IMR-90 (cell line): ENCODE measurements at regions of chr2 and their contacts with region 1.

Region 1: DNA sequence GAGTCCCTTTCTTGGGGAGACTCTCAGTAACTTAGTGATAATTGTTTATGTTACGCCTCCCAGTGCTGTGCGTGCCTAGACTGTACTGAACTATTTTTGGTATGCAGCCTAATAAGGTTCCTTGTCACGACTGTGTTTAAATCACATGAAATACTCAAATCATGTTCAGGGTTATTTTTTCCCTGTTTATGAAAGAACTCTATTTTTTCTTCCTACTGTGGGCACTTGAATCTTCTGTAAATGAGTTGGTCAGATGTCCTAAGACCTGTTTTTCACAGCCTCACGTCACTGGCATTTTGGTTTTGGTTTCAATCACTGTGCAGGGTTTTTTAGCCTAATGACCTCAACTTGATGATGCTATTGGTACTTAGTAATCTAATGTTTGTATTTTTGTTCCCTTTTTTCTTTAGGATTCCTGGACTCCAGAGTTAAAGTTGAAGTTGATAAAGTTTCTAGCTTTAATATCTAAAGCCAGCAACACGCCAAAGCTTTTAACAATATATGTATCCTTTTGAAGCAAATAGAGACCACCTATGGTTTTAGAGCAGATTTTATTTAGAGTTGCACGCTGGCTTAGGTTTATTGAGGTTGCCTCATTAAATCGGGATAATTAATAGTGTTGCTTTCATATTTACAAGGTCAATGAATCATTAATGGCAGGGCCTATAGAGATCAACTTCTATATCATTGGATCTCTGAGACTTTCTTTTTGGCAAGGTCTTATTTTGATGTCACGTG is 24.1 kb downstream of the ARMC9 start:
- DNase-seq: peak; percentile 88
- ATAC-seq: peak; percentile 76
- H3K4me3 ChIP-seq: no peak overlapping the region
- H3K27ac ChIP-seq: peak overlapping the region; percentile 89; the same call in 1 of the 2 replicates
- H3K4me1 ChIP-seq: peaks cover 16% of the 10 kb centered on the region
- H3K27me3 ChIP-seq: no peaks in the 10 kb centered on the region
- CTCF ChIP-seq: no peak
- POLR2A ChIP-seq: no peak
- RAD21 ChIP-seq: no peak

Region 2: GRCh38 chr2:230614913-230615332 is 607.6 kb before region 1 on chr2:
- CTCF ChIA-PET with region 1: no interaction called
- POLR2A ChIA-PET with region 1: no interaction called
- dilution Hi-C with region 1: no loop called
- in situ Hi-C with region 1: no loop called
- intact Hi-C with region 1: no loop called
- DNase-seq: no peak
- ATAC-seq: no peak
- H3K4me3 ChIP-seq: no peak overlapping the region
- H3K27ac ChIP-seq: no peak overlapping the region
- H3K4me1 ChIP-seq: peaks cover 10% of the 10 kb centered on the region
- H3K27me3 ChIP-seq: no peaks in the 10 kb centered on the region
- CTCF ChIP-seq: no peak
- POLR2A ChIP-seq: no peak
- RAD21 ChIP-seq: no peak

Region 3: DNA sequence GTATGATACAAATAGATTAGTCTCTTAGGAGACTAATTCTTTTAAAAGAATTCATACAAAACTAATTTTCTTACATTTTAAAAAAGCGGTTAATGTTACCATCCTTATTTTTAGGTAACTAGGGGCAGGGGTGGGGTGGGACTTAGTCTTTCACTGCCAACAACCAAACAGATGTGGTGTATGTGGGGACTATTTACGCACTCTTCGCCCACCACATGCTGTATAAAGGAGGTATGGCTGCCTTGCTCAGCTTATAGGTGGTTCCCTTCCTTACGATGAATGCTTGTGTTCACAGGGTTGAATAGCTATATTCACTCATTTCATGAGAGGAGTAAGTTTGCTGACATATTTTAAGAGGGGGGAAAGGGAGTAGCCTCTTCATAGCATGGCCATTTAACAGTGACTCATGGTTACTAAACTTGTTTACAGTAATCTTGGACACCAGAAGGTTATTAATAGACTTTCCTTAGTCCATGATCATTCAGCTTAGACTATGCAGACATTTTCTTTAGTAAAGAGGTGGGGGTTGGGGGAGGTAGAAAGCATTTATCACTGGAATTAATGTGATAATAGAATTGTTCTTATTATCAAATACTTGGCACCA is 448.0 kb before region 1 on chr2:
- CTCF ChIA-PET with region 1: no interaction called
- POLR2A ChIA-PET with region 1: no interaction called
- dilution Hi-C with region 1: no loop called
- in situ Hi-C with region 1: no loop called
- intact Hi-C with region 1: no loop called
- DNase-seq: peak; percentile 92
- ATAC-seq: peak; percentile 89
- H3K4me3 ChIP-seq: no peak overlapping the region
- H3K27ac ChIP-seq: peak overlapping the region; percentile 67; the same call in 1 of the 2 replicates
- H3K4me1 ChIP-seq: peaks cover 12% of the 10 kb centered on the region
- H3K27me3 ChIP-seq: no peaks in the 10 kb centered on the region
- CTCF ChIP-seq: no peak
- POLR2A ChIP-seq: no peak
- RAD21 ChIP-seq: no peak

Region 4: DNA sequence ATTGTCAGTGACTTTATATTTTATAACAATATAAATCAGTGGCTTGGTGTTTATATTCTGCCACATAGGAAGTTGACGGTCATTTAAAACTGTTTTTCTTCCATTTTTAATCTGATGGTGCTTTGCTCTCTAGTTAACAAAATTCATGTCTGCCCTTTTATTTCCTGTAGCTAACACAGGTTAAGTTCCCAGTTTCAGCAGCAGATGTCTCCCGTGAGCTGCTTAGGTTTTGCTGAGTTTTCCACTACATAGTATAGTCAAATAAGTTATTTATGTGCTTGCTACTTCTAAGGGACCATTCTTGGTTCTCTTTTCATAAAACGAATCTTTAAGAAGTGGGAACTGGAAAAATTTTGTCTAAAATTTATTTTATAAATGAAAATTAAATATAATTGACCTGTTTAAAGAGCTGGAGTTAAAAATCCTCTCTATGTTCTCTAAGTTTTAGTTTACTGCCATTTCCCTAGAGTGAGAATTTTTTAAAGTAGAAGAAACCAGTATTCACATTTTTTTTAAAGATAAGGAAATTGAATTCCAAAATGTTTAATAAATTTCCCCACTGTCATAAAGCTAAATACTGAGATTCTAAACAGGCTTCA is 118.3 kb before region 1 on chr2:
- CTCF ChIA-PET with region 1: no interaction called
- POLR2A ChIA-PET with region 1: no interaction called
- dilution Hi-C with region 1: no loop called
- in situ Hi-C with region 1: no loop called
- intact Hi-C with region 1: loop called (anchors 1 kb)
- DNase-seq: peak; percentile 75
- ATAC-seq: peak; percentile 94
- H3K4me3 ChIP-seq: no peak overlapping the region
- H3K27ac ChIP-seq: peak overlapping the region; percentile 15; the same call in 1 of the 2 replicates
- H3K4me1 ChIP-seq: peaks cover 7% of the 10 kb centered on the region
- H3K27me3 ChIP-seq: no peaks in the 10 kb centered on the region
- CTCF ChIP-seq: peak; percentile 89
- POLR2A ChIP-seq: no peak
- RAD21 ChIP-seq: peak; percentile 90

Region 5: GRCh38 chr2:231161877-231162329 is 60.6 kb before region 1 on chr2:
- CTCF ChIA-PET with region 1: no interaction called
- POLR2A ChIA-PET with region 1: no interaction called
- dilution Hi-C with region 1: no loop called
- in situ Hi-C with region 1: no loop called
- intact Hi-C with region 1: loop called (anchors 2 kb)
- DNase-seq: peak; percentile 99
- ATAC-seq: peak; percentile 89
- H3K4me3 ChIP-seq: no peak overlapping the region
- H3K27ac ChIP-seq: peak overlapping the region; percentile 88; the same call in 1 of the 2 replicates
- H3K4me1 ChIP-seq: peaks cover 23% of the 10 kb centered on the region
- H3K27me3 ChIP-seq: no peaks in the 10 kb centered on the region
- CTCF ChIP-seq: no peak
- POLR2A ChIP-seq: 0 out of 2 replicates have a peak, but pooled peaks have one; percentile 37
- RAD21 ChIP-seq: peak; percentile 17; the same call in 1 of the 2 replicates

Region 6: DNA sequence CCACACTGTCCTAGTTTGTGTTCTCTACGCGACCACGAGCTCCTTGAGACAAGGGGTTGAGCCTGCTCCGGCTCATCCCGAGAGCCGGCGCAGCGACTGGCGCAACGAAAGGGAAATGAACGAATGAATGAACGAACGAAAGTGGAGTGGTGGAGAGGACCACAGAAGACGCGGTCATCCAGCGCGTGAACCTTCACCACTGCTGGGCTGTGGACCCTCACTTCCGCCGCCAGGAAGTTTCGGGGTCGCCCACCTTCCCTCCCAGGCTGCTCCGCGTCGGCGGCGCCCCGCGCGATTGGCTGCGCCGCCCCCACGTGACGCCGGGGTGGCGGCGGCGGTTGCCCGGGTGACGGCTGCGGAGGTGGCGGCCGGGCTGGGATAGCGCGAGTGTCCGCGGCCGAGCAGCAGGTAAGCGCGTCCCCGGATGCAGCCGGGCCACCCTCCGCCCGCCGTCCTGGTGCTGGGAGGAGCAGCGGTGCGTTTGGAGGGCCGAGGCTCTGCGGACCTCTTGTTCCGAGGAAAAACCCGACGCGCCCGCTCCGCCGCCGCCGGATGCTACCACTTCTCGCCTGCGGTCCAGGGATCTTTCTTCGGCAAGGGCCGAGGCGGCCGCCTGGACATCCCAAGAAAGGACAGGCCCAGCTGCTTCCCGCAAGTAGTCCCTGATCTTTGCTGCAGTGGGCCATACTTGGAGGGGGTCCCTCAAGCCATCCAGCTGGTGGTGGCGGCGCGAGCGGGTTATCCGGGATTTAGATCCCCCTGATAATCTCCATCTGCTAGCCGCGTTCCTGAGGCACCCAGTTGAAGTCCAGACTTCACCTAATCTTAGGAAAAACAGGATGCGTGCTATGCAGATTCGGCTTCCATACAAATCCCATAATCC is 24.0 kb before region 1 on chr2 and contains the start of gene ARMC9:
- CTCF ChIA-PET with region 1: interaction called, 5 read pairs
- POLR2A ChIA-PET with region 1: no interaction called
- dilution Hi-C with region 1: no loop called
- in situ Hi-C with region 1: no loop called
- intact Hi-C with region 1: loop called (anchors 2 kb)
- DNase-seq: peak; percentile 51
- ATAC-seq: peak; percentile 96
- H3K4me3 ChIP-seq: peak within 1 kb of the TSS; percentile 95
- H3K27ac ChIP-seq: peak within 1 kb of the TSS; percentile 92
- H3K4me1 ChIP-seq: peaks cover 9% of the 10 kb centered on the region; the same call in 1 of the 2 replicates
- H3K27me3 ChIP-seq: no peaks in the 10 kb centered on the region
- CTCF ChIP-seq: no peak
- POLR2A ChIP-seq: no peak; the same call in 1 of the 2 replicates
- RAD21 ChIP-seq: no peak
- total RNA-seq, gene ARMC9: 39.4 and 46.6 TPM in 2 replicates